ENCODE measurements at regions of chr4 and their contacts with region 1.

Region 1: DNA sequence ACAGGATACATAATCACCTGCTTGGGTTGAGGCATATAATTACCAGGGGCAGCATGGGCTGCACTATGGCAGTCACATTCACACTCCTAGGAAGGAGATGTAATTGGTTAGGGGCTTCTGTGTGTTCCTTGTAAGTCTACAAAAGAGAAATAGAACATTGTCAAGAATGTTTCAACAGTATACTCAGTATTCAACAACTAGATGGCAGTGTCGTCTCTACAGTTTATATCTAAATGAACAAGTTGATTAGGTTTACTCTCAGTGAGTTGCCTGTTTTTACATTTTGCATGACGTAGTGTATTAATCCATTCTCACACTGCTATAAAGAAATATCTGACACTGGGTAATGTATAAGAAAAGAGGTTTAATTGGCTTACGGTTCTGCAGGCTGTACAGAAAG is 50.5 kb upstream of the RAB33B start:
- DNase-seq: no peak
- ATAC-seq: peak in 1 of 4 donors; percentile 25
- H3K4me3 ChIP-seq: no peak overlapping the region
- H3K27ac ChIP-seq: no peak overlapping the region
- H3K4me1 ChIP-seq: no peaks in the 10 kb centered on the region
- H3K27me3 ChIP-seq: no peaks in the 10 kb centered on the region
- CTCF ChIP-seq: no peak

Region 2: DNA sequence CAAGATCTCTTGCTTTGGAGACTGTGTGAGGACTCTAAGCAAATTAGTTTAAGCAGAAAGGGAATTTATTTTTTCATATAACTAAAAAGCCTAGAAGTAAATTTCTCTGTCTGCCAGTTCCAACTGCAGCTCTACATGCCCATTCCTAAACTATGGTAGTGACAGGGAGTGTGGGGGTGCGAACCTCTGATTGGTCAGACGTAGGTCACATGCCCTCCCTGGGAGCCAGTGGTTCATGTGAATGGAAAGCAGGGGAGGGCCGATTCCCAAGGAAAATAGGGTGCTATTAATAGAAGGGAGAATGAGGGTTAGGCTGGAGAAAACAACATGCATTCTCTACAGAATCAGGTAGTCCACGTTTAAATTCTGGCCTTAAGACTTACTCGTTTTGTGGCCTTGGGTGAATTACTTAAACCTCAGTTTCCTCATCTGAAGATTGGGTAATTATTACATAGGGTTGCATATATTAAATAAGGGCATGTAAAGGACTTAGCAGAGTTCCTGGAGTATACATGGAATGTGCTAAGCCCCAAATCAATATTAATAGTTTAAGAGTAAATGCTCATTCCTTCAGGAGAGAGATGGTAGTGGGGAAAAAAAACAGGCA is 57.7 kb after region 1 on chr4:
- intact Hi-C with region 1: loop called in 1 of 2 experiments (anchors 10 kb)
- DNase-seq: no peak
- ATAC-seq: no peak
- H3K4me3 ChIP-seq: no peak overlapping the region
- H3K27ac ChIP-seq: no peak overlapping the region
- H3K4me1 ChIP-seq: peaks cover 11% of the 10 kb centered on the region
- H3K27me3 ChIP-seq: no peaks in the 10 kb centered on the region
- CTCF ChIP-seq: no peak

Region 3: DNA sequence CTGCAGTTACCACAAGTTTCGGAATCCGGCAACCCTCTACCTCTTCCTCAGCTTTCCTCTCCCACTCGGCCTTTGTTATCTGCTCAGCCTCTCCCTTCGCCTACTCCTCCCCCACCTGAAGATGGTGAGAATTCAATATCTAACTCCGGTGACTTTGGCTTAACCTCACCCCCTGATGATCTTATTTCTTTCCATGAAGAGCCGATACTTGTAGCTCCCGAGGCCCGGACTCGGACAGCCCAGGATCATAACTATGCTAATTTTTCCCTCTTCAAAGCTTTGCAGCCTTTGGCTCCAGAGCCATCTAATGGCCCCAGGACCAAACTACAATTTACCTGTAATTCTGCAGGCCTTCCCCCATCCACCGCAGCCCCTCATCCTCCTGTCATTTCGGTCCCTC is 230.2 kb after region 1 on chr4:
- intact Hi-C with region 1: loop called in 1 of 2 experiments (anchors 10 kb)
- DNase-seq: peak in 1 of 2 donors; percentile 22
- ATAC-seq: peak; percentile 67 to 87 (median 81)
- H3K4me3 ChIP-seq: peak overlapping the region; percentile 25
- H3K27ac ChIP-seq: no peak overlapping the region
- H3K4me1 ChIP-seq: no peaks in the 10 kb centered on the region
- H3K27me3 ChIP-seq: no peaks in the 10 kb centered on the region
- CTCF ChIP-seq: peak; percentile 51

Region 4: DNA sequence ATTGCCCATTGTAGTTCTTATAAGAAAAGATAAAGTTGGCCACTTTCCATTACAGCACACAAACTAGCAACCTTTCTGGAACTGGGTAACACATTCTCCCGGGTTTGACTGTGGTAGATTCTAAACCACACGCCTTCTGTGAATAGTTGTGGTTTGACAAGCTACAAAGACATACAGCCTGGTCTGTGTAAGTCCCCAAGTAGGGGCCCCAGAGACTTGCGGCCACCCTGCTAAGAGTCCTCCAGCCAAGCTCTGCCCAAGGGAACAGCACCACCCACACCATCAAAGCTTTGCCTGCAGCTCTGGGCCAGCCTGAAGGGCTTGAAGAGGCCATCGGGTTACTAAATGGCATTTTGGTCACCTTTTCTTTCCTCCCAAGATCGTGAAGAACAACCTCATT is 547.1 kb after region 1 on chr4:
- intact Hi-C with region 1: no loop called
- DNase-seq: no peak
- ATAC-seq: no peak
- H3K4me3 ChIP-seq: no peak overlapping the region
- H3K27ac ChIP-seq: no peak overlapping the region
- H3K4me1 ChIP-seq: peaks cover 4% of the 10 kb centered on the region
- H3K27me3 ChIP-seq: no peaks in the 10 kb centered on the region
- CTCF ChIP-seq: no peak